Mammary epithelial cell (primary cell): ENCODE measurements at regions of chr22 and their contacts with region 1.

Region 1: DNA sequence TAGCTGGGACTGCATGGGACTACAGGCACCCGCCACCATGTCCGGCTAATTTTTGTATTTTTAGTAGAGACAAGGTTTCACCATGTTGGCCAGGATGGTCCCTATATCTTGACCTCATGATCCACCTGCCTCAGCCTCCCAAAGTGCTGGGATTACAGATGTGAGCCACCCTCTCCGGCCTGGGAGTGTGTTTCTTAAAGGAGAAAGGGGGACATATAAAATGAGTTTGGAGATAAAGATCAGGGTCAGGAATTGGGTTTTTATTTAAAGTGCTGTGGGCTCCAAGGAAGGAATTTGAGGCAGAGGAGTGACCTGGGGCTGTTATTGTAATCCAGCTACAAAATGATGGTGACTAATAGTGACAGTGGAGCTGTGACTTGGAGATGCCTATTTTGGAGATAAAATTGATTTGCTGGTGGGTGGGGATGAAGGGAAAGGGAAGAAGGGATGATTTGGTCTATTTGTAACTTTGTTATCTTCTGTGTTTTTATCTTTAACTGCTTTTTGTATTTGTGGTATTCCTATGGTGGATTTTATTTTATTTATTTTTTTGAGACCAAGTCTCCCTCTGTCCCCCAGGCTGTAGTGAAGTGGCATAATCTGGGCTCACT is 5.0 kb downstream of the CRKL start:
- DNase-seq: no peak
- H3K4me3 ChIP-seq: no peak overlapping the region
- H3K27ac ChIP-seq: no peak overlapping the region
- H3K4me1 ChIP-seq: peaks cover 14% of the 10 kb centered on the region
- H3K27me3 ChIP-seq: no peaks in the 10 kb centered on the region
- CTCF ChIP-seq: no peak

Region 2: DNA sequence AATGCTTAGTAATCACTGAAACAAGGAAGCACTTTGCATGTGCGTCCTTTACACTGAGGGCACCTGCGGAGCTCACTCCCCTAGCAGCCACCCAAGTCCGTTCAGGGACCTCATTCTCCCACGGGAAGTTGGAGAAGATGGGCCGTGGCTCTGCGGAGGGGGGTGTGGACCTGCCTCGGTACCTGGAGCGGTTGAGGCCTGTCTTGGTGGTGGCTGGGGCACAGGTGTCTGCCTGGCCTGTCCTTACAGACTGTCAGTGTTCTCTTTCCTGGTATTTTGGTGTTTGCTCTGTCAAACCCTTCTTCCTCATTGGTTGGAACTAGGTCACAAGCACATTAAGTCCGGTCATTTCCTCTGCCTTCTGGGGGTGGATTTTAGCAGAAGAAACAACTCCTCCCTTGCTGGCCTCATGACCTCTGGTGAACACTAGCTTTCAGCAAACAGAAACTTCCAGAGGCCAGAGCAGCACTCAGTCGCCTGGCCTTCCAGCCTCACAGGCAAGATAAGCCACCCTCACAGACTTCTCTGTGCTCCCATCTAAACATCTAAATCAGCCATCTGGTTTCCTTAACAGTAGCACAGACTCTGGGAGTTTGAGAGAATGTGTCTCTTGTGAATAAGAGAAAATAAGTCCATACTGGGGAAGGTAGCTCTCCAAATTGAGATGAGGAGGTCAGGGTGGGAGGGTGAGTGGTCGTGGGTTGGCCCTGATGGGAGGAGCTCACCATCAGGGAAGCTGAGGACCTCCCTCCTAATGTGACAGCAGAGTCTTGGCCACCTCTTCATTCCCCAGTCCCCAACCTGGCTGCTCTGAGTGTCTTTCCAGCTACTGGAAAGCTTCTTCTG is 54.8 kb before region 1 on chr22:
- CTCF ChIA-PET with region 1: no interaction called
- dilution Hi-C with region 1: loop called (anchors 5 kb)
- in situ Hi-C with region 1: no loop called
- intact Hi-C with region 1: no loop called
- DNase-seq: no peak
- H3K4me3 ChIP-seq: no peak overlapping the region
- H3K27ac ChIP-seq: no peak overlapping the region
- H3K4me1 ChIP-seq: peaks cover 4% of the 10 kb centered on the region
- H3K27me3 ChIP-seq: no peaks in the 10 kb centered on the region
- CTCF ChIP-seq: no peak

Region 3: DNA sequence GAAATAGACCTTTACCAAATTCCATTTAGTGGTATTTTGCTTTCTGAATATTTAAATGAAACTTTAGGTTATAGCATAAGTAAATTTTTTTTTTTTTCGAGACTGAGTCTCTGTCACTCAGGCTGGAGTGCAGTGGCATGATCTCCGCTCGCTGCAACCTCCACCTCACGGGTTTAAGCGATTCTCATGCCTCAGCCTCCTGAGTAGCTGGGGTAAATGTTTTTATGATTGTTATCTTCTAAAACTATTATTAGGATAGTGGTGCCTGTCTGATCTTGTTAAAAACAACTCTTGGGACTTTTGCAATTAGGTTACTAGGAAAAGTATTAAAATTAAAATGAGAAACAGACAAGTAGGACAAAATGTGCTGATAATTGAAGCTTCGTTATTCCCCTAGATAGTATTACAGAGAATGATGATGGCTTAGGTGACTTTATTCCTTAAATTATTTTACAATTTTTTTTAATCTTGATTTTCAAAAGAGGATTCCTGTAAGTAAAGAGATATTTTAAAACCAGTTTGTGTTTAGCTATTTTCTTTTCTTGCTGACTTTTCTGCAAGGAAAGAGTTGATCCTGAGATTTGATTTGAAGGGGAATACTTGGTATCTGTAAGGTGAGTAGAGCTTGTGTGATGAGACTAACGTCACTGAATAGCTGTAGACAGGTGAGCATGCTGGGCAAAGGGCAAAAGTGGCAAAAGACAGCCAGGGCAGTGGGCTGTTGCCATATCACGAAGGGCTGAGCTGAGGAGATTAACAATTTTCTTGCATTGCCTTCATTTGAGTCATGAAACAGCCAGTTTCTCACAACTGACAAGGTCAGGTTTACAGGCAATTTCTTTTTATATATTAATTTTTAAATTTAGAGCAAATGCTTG is 15.8 kb after region 1 on chr22:
- CTCF ChIA-PET with region 1: no interaction called
- dilution Hi-C with region 1: no loop called
- in situ Hi-C with region 1: no loop called
- intact Hi-C with region 1: loop called (anchors 2 kb)
- DNase-seq: no peak
- H3K4me3 ChIP-seq: no peak overlapping the region
- H3K27ac ChIP-seq: no peak overlapping the region
- H3K4me1 ChIP-seq: peaks cover 15% of the 10 kb centered on the region
- H3K27me3 ChIP-seq: no peaks in the 10 kb centered on the region
- CTCF ChIP-seq: no peak

Region 4: DNA sequence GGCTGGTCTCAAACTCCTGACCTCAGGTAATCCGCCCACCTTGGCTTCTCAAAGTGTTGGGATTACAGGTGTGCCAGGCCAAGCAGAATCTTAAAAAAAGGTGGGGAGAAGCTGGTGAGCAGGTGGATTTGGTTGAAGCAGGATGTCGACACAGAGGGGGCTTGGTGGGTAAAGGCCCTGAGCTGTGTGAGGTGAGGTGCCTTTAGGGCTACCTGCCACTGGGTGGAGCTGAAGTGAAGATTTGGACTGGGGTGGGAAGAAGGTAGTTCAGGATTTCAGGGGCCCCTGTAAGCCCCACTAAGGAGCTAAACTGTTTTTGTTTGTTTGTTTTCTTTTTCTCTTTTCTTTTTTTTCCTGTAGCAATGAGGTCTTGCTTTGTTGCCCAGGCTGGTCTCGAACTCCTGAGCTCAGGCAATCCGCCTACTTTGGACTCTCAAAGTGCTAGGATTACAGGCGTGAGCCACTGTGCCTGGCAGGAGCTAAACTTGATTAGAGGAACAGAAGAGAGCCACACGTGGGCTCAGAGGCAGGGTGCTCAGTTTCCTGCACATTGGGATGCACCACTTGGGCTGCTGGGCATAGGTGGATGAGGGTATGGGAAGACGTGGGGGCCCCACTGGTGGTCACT is 98.7 kb after region 1 on chr22:
- CTCF ChIA-PET with region 1: no interaction called
- dilution Hi-C with region 1: no loop called
- in situ Hi-C with region 1: no loop called
- intact Hi-C with region 1: no loop called
- DNase-seq: no peak
- H3K4me3 ChIP-seq: no peak overlapping the region
- H3K27ac ChIP-seq: no peak overlapping the region
- H3K4me1 ChIP-seq: peaks cover 11% of the 10 kb centered on the region
- H3K27me3 ChIP-seq: no peaks in the 10 kb centered on the region
- CTCF ChIP-seq: peak; percentile 53 to 67